Breast epithelium (tissue), 4 donors: ENCODE measurements at regions of chr6 and their contacts with region 1.

Region 1: GRCh38 chr6:98797217-98797994 is 37.0 kb upstream of the POU3F2 start:
- DNase-seq: no peak
- H3K4me3 ChIP-seq: no peak overlapping the region
- H3K27ac ChIP-seq: no peak overlapping the region
- H3K4me1 ChIP-seq: no peaks in the 10 kb centered on the region
- H3K27me3 ChIP-seq: peaks cover 0 to 3% of the 10 kb centered on the region in 2 donors
- CTCF ChIP-seq: no peak
- POLR2A ChIP-seq: no peak

Region 2: DNA sequence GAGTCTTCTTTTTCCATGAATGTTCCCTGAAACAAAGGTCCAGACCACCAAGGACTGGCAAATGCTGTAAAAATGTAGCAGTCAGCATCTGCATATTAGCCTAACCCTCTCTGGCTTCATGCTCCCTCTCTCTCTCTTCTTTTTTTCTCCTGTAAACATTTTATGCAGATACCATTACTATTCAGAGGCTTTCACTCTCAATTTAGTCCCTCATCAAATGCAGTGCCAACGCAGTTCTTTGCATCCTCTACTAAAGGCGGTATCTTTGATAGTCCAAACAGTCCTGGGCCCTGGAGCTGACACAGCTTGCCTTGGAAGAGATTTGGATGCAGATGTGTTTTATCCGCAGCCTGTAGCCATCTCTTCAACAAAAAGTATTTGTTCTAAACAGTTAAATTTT is 1347.3 kb before region 1 on chr6:
- intact Hi-C with region 1: loop called (anchors 5 kb)
- DNase-seq: no peak
- H3K4me3 ChIP-seq: no peak overlapping the region
- H3K27ac ChIP-seq: no peak overlapping the region
- H3K4me1 ChIP-seq: no peaks in the 10 kb centered on the region
- H3K27me3 ChIP-seq: no peaks in the 10 kb centered on the region
- CTCF ChIP-seq: no peak
- POLR2A ChIP-seq: no peak

Region 3: GRCh38 chr6:98002678-98003473 is 794.5 kb before region 1 on chr6:
- intact Hi-C with region 1: no loop called
- DNase-seq: no peak
- H3K4me3 ChIP-seq: no peak overlapping the region
- H3K27ac ChIP-seq: no peak overlapping the region
- H3K4me1 ChIP-seq: no peaks in the 10 kb centered on the region
- H3K27me3 ChIP-seq: no peaks in the 10 kb centered on the region
- CTCF ChIP-seq: no peak
- POLR2A ChIP-seq: no peak

Region 4: DNA sequence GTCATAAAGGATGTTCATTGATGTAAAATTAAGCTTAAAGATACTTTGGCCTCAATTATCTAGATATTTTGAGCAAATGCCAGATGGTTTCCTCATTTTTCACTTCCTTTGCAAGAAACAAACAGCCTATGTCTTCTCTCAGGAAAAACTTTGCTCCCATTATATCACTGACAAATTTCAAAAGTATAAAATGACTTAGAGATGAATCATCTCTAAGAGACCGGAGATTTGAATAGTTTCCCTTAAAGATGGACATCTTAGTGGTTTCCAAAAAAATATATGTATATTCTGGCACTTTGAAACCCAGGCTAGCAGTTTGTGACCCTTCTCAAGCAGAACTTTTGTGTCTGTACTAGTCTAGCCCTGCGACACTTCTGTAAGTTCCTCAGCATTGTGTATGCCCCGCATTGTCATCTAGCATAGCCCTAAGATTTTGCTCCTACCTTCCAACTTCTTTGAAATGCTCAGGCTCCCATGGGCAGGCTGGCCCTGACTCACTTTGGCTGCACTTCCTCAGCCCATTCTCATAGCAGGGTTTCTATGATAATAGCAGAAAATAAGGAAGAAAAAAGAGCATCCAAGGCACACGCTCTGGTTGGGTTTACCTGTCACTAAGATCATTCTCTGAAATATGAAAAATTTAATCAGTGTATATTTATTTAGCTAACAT is 11.3 kb after region 1 on chr6:
- intact Hi-C with region 1: no loop called
- DNase-seq: no peak
- H3K4me3 ChIP-seq: no peak overlapping the region
- H3K27ac ChIP-seq: no peak overlapping the region
- H3K4me1 ChIP-seq: no peaks in the 10 kb centered on the region
- H3K27me3 ChIP-seq: peaks cover 0 to 10% of the 10 kb centered on the region in 2 donors
- CTCF ChIP-seq: no peak
- POLR2A ChIP-seq: no peak